ENCODE measurements at regions of chr19 and their contacts with region 1.

Region 1: GRCh38 chr19:37963190-37963936 is 56.4 kb downstream of the SIPA1L3 start:
- DNase-seq: no peak
- ATAC-seq: peak; percentile 59
- H3K4me3 ChIP-seq: no peak overlapping the region
- H3K27ac ChIP-seq: peak overlapping the region; percentile 45
- H3K4me1 ChIP-seq: peaks cover 45% of the 10 kb centered on the region
- H3K27me3 ChIP-seq: no peaks in the 10 kb centered on the region
- CTCF ChIP-seq: peak in 1 of 3 experiments; percentile 9; a peak in 1 of 6 replicates
- EP300 ChIP-seq: no peak
- POLR2A ChIP-seq: no peak
- RAD21 ChIP-seq: no peak

Region 2: DNA sequence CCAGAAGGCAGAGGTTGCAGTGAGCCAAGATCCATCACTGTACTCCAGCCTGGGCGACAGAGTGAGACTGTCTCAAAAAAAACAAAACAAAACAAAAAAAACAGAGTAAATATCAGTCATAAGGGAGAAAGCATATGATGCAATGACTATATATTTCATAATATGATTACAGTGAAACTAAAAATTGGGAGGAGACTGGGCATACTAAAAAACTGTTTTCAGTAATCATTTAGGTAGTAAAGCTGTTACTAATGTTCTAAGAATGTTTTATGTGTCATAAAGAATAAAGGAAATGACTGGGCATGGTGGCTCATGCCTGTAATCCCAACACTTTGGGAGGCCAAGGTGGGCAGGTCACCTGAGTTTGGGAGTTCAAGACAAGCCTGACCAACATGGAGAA is 199.9 kb before region 1 on chr19:
- CTCF ChIA-PET with region 1: no interaction called
- POLR2A ChIA-PET with region 1: no interaction called
- RAD21 ChIA-PET with region 1: no interaction called
- SMC1A ChIA-PET with region 1: no interaction called
- in situ Hi-C with region 1: no loop called
- intact Hi-C with region 1: no loop called
- DNase-seq: no peak
- ATAC-seq: no peak
- H3K4me3 ChIP-seq: no peak overlapping the region
- H3K27ac ChIP-seq: no peak overlapping the region
- H3K4me1 ChIP-seq: no peaks in the 10 kb centered on the region
- H3K27me3 ChIP-seq: no peaks in the 10 kb centered on the region
- CTCF ChIP-seq: no peak
- EP300 ChIP-seq: no peak
- POLR2A ChIP-seq: no peak
- RAD21 ChIP-seq: no peak

Region 3: GRCh38 chr19:37979547-37980082 is 16.3 kb after region 1 on chr19:
- CTCF ChIA-PET with region 1: interaction called, 13 read pairs
- POLR2A ChIA-PET with region 1: interaction called, 47 read pairs
- RAD21 ChIA-PET with region 1: interaction called, 38 read pairs
- SMC1A ChIA-PET with region 1: interaction called, 48 read pairs
- in situ Hi-C with region 1: no loop called
- intact Hi-C with region 1: loop called (anchors 1 kb)
- DNase-seq: peak; percentile 69
- ATAC-seq: peak; percentile 46
- H3K4me3 ChIP-seq: peak overlapping the region; percentile 38; the same call in 1 of the 2 replicates
- H3K27ac ChIP-seq: peak overlapping the region; percentile 95
- H3K4me1 ChIP-seq: peaks cover 58% of the 10 kb centered on the region
- H3K27me3 ChIP-seq: no peaks in the 10 kb centered on the region
- CTCF ChIP-seq: no peak
- EP300 ChIP-seq: no peak
- POLR2A ChIP-seq: peak; percentile 57; the same call in 1 of the 2 replicates
- RAD21 ChIP-seq: no peak

Measured in GM12878 (cell line).